Common myeloid progenitor, CD34-positive (primary cell): ENCODE measurements at regions of chr5 and their contacts with region 1.

Region 1: GRCh38 chr5:130871346-130872086 is 293.5 kb downstream of the HINT1 start:
- DNase-seq: peak; percentile 24 to 58 (median 44)
- H3K4me3 ChIP-seq: no peak overlapping the region
- H3K27ac ChIP-seq: no peak overlapping the region
- H3K4me1 ChIP-seq: no peaks in the 10 kb centered on the region
- H3K27me3 ChIP-seq: no peaks in the 10 kb centered on the region

Region 2: GRCh38 chr5:130642461-130642860 is 229.1 kb before region 1 on chr5:
- CTCF ChIA-PET with region 1: no interaction called
- POLR2A ChIA-PET with region 1: no interaction called
- DNase-seq: no peak
- H3K4me3 ChIP-seq: no peak overlapping the region
- H3K27ac ChIP-seq: no peak overlapping the region
- H3K4me1 ChIP-seq: no peaks in the 10 kb centered on the region
- H3K27me3 ChIP-seq: no peaks in the 10 kb centered on the region

Region 3: GRCh38 chr5:131109540-131110255 is 238.2 kb after region 1 on chr5:
- CTCF ChIA-PET with region 1: interaction called, 21 read pairs
- POLR2A ChIA-PET with region 1: no interaction called
- DNase-seq: peak; percentile 48 to 68 (median 63)
- H3K4me3 ChIP-seq: no peak overlapping the region
- H3K27ac ChIP-seq: no peak overlapping the region
- H3K4me1 ChIP-seq: peaks cover 0 to 11% (median under 1%) of the 10 kb centered on the region in 4 experiments
- H3K27me3 ChIP-seq: no peaks in the 10 kb centered on the region

Region 4: DNA sequence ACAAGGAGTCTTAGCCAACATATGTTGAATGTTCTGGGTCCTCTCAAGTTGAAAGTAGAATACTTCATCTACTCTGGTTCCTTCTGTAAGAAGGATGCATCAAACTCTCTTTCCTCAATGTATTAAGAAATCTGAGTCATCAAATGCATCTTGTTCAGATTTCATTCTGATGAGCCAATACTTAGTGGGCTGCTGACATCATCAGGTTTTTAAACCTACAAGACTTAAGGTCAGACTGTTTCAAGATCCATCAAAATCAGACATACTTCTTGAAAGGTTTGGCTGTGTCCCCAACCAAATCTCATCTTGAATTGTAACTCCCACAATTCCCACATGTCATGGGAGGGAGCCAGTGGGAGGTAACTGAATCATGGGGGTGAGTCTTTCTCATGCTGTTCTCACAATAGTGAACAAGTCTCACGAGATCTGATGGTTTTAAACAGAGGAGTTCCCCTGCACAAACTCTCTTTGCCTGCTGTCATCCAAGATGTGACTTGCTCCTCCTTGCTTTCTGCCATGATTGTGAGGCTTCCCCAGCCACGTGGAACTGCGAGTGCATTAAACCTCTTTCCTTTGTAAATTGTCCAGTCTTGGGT is 594.8 kb after region 1 on chr5:
- CTCF ChIA-PET with region 1: no interaction called
- POLR2A ChIA-PET with region 1: no interaction called
- DNase-seq: peak in 2 of 3 donors; percentile 8 to 10
- H3K4me3 ChIP-seq: no peak overlapping the region
- H3K27ac ChIP-seq: no peak overlapping the region
- H3K4me1 ChIP-seq: peaks cover 9 to 25% (median 14%) of the 10 kb centered on the region in 4 experiments
- H3K27me3 ChIP-seq: no peaks in the 10 kb centered on the region